ENCODE measurements at regions of chr20 and their contacts with region 1.

Region 1: GRCh38 chr20:25407311-25408169 is at the start of gene GINS1:
- DNase-seq: peak; percentile 97
- H3K4me3 ChIP-seq: peak within 1 kb of the TSS; percentile 81
- H3K27ac ChIP-seq: peak within 1 kb of the TSS; percentile 91
- H3K4me1 ChIP-seq: peaks cover 8% of the 10 kb centered on the region
- H3K27me3 ChIP-seq: no peaks in the 10 kb centered on the region
- CTCF ChIP-seq: no peak
- total RNA-seq, gene GINS1: 60.0 and 62.6 TPM in 2 replicates

Region 2: GRCh38 chr20:25418776-25419175 is 11.2 kb after region 1 on chr20:
- CTCF ChIA-PET with region 1: no interaction called
- POLR2A ChIA-PET with region 1: interaction called, 10 read pairs
- intact Hi-C with region 1: no loop called
- DNase-seq: no peak
- H3K4me3 ChIP-seq: no peak overlapping the region
- H3K27ac ChIP-seq: no peak overlapping the region
- H3K4me1 ChIP-seq: no peaks in the 10 kb centered on the region
- H3K27me3 ChIP-seq: no peaks in the 10 kb centered on the region
- CTCF ChIP-seq: no peak